Activated CD4-positive, alpha-beta T cell treated with anti-CD3 and anti-CD28 coated beads for 36 hours (primary cell): ENCODE measurements at regions of chr6 and their contacts with region 1.

Region 1: GRCh38 chr6:27146706-27147505 is 100.6 kb upstream of the PRSS16 start:
- DNase-seq: peak; percentile 89
- ATAC-seq: peak; percentile 69
- H3K4me3 Mint-ChIP-seq: no peak overlapping the region
- H3K27ac Mint-ChIP-seq: no peak overlapping the region
- H3K4me1 Mint-ChIP-seq: peaks cover 11% of the 10 kb centered on the region
- H3K27me3 Mint-ChIP-seq: no peaks in the 10 kb centered on the region

Region 2: GRCh38 chr6:26031595-26032339 is 1115.1 kb before region 1 on chr6:
- CTCF ChIA-PET with region 1: no interaction called
- POLR2A ChIA-PET with region 1: interaction called, 9 read pairs
- intact Hi-C with region 1: loop called in 1 of 2 experiments (anchors 2 kb)
- DNase-seq: peak; percentile 92
- ATAC-seq: peak; percentile 69
- H3K4me3 Mint-ChIP-seq: peak overlapping the region; percentile 81
- H3K27ac Mint-ChIP-seq: peak overlapping the region; percentile 98
- H3K4me1 Mint-ChIP-seq: peaks cover 50% of the 10 kb centered on the region
- H3K27me3 Mint-ChIP-seq: no peaks in the 10 kb centered on the region

Region 3: GRCh38 chr6:26216356-26216885 is 930.5 kb before region 1 on chr6:
- CTCF ChIA-PET with region 1: no interaction called
- POLR2A ChIA-PET with region 1: interaction called, 13 read pairs
- intact Hi-C with region 1: no loop called
- DNase-seq: peak; percentile 88
- ATAC-seq: peak; percentile 76
- H3K4me3 Mint-ChIP-seq: no peak overlapping the region
- H3K27ac Mint-ChIP-seq: no peak overlapping the region
- H3K4me1 Mint-ChIP-seq: peaks cover 2% of the 10 kb centered on the region
- H3K27me3 Mint-ChIP-seq: no peaks in the 10 kb centered on the region

Region 4: DNA sequence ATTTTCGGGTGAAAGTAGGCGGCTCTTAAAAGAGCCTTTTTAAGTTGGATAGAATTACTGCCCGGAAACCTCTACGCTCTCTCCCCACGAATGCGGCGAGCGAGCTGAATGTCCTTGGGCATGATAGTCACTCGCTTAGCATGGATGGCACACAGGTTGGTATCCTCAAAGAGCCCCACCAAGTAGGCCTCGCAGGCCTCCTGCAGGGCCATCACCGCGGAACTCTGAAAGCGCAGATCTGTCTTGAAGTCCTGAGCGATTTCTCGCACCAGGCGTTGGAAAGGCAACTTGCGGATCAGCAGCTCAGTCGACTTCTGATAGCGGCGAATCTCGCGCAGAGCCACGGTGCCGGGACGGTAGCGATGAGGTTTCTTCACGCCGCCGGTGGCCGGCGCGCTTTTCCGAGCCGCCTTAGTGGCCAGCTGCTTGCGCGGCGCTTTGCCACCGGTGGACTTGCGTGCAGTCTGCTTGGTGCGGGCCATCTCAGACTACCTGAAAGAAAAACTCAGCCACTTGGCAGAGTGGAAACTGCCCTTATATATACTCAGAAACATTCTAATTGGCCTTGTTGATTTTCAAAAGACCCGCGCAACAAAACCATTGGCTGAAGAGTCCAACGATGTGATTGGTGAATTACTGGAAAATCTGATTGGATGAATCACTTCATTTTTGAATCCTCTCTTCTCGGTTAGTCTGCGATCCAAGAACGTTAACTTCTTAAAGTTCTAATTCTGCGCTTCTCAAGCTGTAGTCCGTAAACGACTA is 875.8 kb before region 1 on chr6:
- CTCF ChIA-PET with region 1: no interaction called
- POLR2A ChIA-PET with region 1: interaction called, 11 read pairs
- intact Hi-C with region 1: loop called in 1 of 2 experiments (anchors 2 kb)
- DNase-seq: peak; percentile 85
- ATAC-seq: peak; percentile 43
- H3K4me3 Mint-ChIP-seq: no peak overlapping the region
- H3K27ac Mint-ChIP-seq: no peak overlapping the region
- H3K4me1 Mint-ChIP-seq: peaks cover 23% of the 10 kb centered on the region
- H3K27me3 Mint-ChIP-seq: no peaks in the 10 kb centered on the region

Region 5: GRCh38 chr6:26543953-26544352 is 603.0 kb before region 1 on chr6:
- CTCF ChIA-PET with region 1: no interaction called
- POLR2A ChIA-PET with region 1: no interaction called
- intact Hi-C with region 1: no loop called
- DNase-seq: no peak
- ATAC-seq: peak; percentile 72
- H3K4me3 Mint-ChIP-seq: no peak overlapping the region
- H3K27ac Mint-ChIP-seq: peak overlapping the region; percentile 59
- H3K4me1 Mint-ChIP-seq: peaks cover 40% of the 10 kb centered on the region
- H3K27me3 Mint-ChIP-seq: no peaks in the 10 kb centered on the region

Region 6: DNA sequence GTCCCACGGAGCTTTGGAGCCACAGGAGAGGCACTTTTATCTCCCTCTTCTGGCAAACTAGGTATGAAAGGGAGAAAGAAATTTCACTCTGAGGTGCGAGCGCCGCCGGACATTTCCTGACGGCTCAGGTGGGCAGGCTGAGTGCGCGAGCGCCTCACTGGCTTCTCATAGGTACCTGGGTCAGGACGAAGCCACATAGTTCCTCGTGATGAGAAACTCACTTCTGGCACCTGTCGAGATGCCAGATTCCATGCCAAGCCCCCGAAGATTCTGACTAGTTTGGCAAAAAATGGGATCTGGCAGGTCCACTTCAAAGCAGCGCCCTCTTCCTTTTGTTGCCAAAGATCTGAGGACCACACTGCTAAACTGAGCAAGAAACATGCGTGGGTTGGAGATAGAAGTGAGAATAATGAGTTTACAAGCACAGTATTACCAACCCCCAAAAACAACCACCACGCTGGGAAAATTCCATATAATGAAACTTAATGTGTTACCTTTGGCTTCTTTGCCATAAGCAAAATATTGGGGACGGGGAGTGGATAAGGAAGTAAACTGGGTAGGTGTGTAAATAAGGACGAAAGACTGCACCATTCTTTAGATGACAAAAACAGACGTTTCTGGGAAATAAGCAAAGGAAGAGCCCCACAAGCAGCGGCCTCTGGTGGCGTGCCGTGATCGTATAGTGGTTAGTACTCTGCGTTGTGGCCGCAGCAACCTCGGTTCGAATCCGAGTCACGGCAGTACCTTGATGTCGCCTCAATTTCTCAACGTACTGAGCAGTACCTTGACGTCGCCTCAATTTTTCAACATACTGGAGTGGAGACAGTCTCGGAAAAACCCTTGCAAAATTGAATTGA is 10.8 kb after region 1 on chr6:
- CTCF ChIA-PET with region 1: interaction called, 3 read pairs
- POLR2A ChIA-PET with region 1: interaction called, 28 read pairs
- intact Hi-C with region 1: loop called (anchors 1 kb)
- DNase-seq: peak; percentile 91
- ATAC-seq: peak; percentile 84
- H3K4me3 Mint-ChIP-seq: peak overlapping the region; percentile 78
- H3K27ac Mint-ChIP-seq: peak overlapping the region; percentile 92
- H3K4me1 Mint-ChIP-seq: peaks cover 46% of the 10 kb centered on the region
- H3K27me3 Mint-ChIP-seq: no peaks in the 10 kb centered on the region

Region 7: GRCh38 chr6:27260369-27260768 is 113.5 kb after region 1 on chr6:
- CTCF ChIA-PET with region 1: no interaction called
- POLR2A ChIA-PET with region 1: no interaction called
- intact Hi-C with region 1: no loop called
- DNase-seq: no peak
- ATAC-seq: no peak
- H3K4me3 Mint-ChIP-seq: no peak overlapping the region
- H3K27ac Mint-ChIP-seq: no peak overlapping the region
- H3K4me1 Mint-ChIP-seq: no peaks in the 10 kb centered on the region
- H3K27me3 Mint-ChIP-seq: peaks cover 51% of the 10 kb centered on the region

Region 8: DNA sequence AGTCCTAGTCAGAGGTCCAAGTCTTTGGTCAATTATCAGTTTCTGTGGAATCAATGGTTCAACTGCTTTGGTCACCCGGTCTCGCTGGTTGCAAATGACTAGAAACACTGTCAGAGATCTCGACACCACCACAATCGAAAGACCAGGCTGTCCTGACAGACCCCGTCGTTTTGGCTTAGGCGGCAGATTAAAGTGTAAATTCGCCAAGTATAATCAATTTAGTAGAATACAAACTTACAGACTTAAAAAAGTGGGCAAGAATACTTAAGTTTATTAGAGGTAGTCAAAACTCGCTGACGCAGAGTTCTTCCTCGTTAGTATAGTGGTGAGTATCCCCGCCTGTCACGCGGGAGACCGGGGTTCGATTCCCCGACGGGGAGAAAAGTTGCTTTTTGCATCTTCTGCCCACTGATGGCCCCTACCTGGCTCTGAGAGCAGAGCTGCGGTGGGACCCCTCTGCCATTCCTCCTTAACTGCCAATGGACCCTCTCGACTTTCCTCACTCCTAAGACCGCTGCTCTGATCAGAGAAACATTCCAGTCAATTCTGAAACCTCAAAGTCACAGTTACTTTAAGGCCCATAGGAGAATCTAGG is 356.6 kb after region 1 on chr6:
- CTCF ChIA-PET with region 1: no interaction called
- POLR2A ChIA-PET with region 1: no interaction called
- intact Hi-C with region 1: no loop called
- DNase-seq: peak; percentile 87
- ATAC-seq: peak; percentile 40
- H3K4me3 Mint-ChIP-seq: peak overlapping the region; percentile 88
- H3K27ac Mint-ChIP-seq: peak overlapping the region; percentile 83
- H3K4me1 Mint-ChIP-seq: peaks cover 26% of the 10 kb centered on the region
- H3K27me3 Mint-ChIP-seq: peaks cover 4% of the 10 kb centered on the region

Region 9: DNA sequence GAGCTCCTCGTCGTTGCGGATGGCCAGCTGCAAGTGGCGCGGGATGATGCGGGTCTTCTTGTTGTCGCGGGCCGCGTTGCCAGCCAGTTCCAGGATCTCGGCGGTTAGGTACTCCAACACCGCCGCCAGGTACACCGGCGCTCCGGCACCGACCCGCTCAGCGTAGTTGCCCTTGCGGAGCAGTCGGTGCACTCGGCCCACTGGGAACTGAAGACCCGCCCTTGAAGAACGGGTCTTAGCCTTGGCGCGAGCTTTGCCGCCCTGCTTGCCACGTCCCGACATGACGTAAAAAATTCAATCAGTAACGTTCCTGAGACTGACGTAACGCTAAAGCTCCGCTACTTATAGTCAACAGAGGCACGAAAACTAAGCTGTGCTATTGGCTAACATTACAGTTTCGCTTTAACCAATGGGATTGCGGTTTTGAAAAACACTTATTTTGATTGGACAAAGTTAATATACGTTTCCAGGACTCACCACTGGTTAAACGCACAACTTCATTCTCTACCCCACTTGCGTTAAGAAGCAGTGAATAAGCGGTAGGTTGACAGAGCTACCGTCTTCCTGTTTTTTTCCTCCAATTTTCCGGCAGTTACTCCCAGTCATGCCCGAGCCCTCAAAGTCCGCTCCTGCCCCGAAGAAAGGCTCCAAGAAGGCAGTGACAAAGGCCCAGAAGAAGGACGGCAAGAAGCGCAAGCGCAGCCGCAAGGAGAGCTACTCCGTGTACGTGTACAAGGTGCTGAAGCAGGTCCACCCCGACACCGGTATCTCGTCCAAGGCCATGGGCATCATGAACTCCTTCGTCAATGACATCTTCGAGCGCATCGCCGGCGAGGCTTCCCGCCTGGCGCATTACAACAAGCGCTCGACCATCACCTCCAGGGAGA is 691.4 kb after region 1 on chr6:
- CTCF ChIA-PET with region 1: no interaction called
- POLR2A ChIA-PET with region 1: interaction called, 15 read pairs
- intact Hi-C with region 1: loop called in 1 of 2 experiments (anchors 1 kb)
- DNase-seq: peak; percentile 89
- ATAC-seq: peak; percentile 74
- H3K4me3 Mint-ChIP-seq: no peak overlapping the region
- H3K27ac Mint-ChIP-seq: no peak overlapping the region
- H3K4me1 Mint-ChIP-seq: peaks cover 23% of the 10 kb centered on the region
- H3K27me3 Mint-ChIP-seq: peaks cover 9% of the 10 kb centered on the region

Region 10: DNA sequence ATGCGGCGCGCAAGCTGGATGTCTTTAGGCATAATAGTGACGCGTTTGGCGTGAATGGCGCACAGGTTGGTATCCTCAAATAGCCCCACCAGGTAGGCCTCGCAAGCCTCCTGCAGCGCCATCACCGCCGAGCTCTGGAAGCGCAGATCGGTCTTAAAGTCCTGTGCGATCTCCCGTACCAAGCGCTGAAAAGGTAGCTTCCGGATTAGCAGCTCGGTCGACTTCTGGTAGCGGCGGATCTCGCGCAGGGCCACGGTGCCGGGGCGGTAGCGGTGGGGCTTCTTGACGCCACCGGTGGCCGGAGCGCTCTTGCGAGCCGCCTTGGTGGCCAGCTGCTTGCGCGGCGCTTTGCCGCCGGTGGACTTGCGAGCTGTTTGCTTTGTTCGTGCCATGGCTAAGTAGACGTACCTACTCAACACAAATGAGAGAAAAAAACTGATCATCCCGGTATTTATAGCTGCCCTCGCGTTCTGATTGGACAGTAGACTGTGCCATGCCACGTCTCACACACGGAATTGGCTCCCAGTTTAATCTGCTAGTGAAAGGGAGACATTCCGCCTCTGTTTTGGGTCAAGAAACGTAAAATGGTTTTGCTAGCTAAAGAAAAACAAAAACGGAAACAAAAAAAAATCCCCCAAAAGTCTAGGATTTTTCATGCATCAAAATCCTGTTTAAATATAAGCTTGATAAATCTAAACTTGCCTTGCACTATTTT is 725.2 kb after region 1 on chr6:
- CTCF ChIA-PET with region 1: no interaction called
- POLR2A ChIA-PET with region 1: interaction called, 48 read pairs
- intact Hi-C with region 1: loop called (anchors 2 kb)
- DNase-seq: peak; percentile 84
- ATAC-seq: peak; percentile 59
- H3K4me3 Mint-ChIP-seq: peak overlapping the region; percentile 81
- H3K27ac Mint-ChIP-seq: peak overlapping the region; percentile 96
- H3K4me1 Mint-ChIP-seq: peaks cover 40% of the 10 kb centered on the region
- H3K27me3 Mint-ChIP-seq: no peaks in the 10 kb centered on the region

Region 11: DNA sequence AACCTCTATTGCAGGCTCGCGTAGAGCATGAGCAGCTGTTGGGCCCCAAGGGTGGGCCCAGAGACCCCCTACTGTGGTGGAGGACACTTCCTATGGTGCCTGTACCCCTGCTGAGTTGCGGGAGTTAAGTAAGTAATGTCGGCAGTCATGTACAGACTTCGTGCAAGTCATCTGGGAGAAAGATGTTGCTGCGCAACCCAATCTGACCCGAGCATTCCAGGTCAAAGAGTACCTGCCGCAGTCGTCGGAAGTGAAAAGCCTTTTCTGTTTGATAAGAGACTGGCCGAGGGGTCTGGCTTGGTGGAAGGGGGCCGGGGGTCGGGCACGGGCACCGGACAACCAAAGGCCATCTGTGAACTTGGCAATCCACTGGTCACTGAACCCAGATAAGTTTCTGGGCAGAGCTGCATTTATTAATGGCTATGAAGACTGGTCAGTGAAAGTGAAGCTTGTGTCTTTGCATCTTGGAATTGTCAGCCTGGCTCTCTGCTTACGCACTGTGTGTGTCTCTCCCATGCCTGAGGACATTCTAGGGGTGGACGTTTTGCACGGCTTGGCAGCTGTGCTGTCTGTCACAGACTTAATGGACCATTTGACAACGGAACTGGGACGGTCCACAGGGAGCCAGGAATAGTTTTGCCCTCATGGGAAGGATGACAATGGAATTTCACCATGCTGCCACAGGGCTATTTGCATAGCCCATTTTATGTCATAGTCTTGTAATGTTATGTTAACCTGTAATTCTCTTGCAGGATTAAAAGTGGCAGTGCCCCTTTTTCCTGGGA is 854.6 kb after region 1 on chr6:
- CTCF ChIA-PET with region 1: no interaction called
- POLR2A ChIA-PET with region 1: no interaction called
- intact Hi-C with region 1: no loop called
- DNase-seq: no peak
- ATAC-seq: no peak
- H3K4me3 Mint-ChIP-seq: no peak overlapping the region
- H3K27ac Mint-ChIP-seq: no peak overlapping the region
- H3K4me1 Mint-ChIP-seq: no peaks in the 10 kb centered on the region
- H3K27me3 Mint-ChIP-seq: peaks cover 15% of the 10 kb centered on the region